GM12878 (cell line): ENCODE measurements at regions of chr4 and their contacts with region 1.

Region 1: DNA sequence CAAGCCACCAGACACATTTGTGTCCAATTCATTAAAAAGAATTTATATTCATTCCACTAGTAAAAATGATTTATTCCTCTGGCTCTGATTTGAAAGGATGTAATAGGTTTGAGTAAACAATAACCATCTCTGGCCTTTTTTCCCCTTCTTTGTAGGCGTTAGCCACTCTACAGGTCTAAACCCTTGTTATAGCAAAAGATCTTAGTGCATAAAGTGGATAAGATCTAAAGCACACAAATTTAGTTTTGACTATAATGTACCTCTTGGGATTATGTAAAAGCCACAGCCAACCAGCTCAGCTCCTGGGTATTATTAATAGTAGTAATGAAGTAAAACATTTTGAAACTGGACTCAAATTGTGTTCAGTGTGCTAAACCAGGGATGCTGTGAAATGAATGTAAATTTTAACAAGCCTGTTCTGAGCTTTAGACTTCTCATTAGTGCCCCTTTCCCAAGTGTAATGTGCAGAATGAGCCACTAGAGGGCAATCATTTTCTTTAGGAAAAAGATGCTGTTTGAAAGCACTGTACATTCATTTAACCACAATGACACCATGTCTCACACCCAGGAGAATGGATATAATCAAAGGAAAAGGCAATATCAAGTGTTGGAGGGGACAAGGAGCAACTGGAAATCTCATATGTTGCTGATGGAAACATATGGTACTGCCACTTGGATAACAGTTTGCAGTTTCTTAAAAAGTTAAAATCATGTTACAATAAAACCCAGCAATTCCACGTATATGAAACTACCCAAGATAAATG is 69.7 kb downstream of the KLHL8 start:
- DNase-seq: peak; percentile 35
- ATAC-seq: peak; percentile 84
- H3K4me3 ChIP-seq: no peak overlapping the region
- H3K27ac ChIP-seq: no peak overlapping the region
- H3K4me1 ChIP-seq: no peaks in the 10 kb centered on the region
- H3K27me3 ChIP-seq: no peaks in the 10 kb centered on the region
- CTCF ChIP-seq: peak; percentile 82 to 92 (median 84)
- EP300 ChIP-seq: no peak
- POLR2A ChIP-seq: no peak
- RAD21 ChIP-seq: peak; percentile 90

Region 2: GRCh38 chr4:87133183-87133582 is 17.5 kb before region 1 on chr4:
- CTCF ChIA-PET with region 1: interaction called, 8 read pairs
- POLR2A ChIA-PET with region 1: no interaction called
- RAD21 ChIA-PET with region 1: interaction called, 3 read pairs
- SMC1A ChIA-PET with region 1: interaction called, 12 read pairs
- in situ Hi-C with region 1: no loop called
- intact Hi-C with region 1: no loop called
- DNase-seq: no peak
- ATAC-seq: no peak
- H3K4me3 ChIP-seq: no peak overlapping the region
- H3K27ac ChIP-seq: no peak overlapping the region
- H3K4me1 ChIP-seq: no peaks in the 10 kb centered on the region
- H3K27me3 ChIP-seq: no peaks in the 10 kb centered on the region
- CTCF ChIP-seq: no peak
- EP300 ChIP-seq: no peak
- POLR2A ChIP-seq: no peak
- RAD21 ChIP-seq: no peak

Region 3: GRCh38 chr4:87171944-87172343 is 21.3 kb after region 1 on chr4:
- CTCF ChIA-PET with region 1: interaction called, 21 read pairs
- POLR2A ChIA-PET with region 1: no interaction called
- RAD21 ChIA-PET with region 1: interaction called, 6 read pairs
- SMC1A ChIA-PET with region 1: interaction called, 4 read pairs
- in situ Hi-C with region 1: no loop called
- intact Hi-C with region 1: no loop called
- DNase-seq: no peak
- ATAC-seq: no peak
- H3K4me3 ChIP-seq: no peak overlapping the region
- H3K27ac ChIP-seq: no peak overlapping the region
- H3K4me1 ChIP-seq: no peaks in the 10 kb centered on the region
- H3K27me3 ChIP-seq: no peaks in the 10 kb centered on the region
- CTCF ChIP-seq: no peak
- EP300 ChIP-seq: no peak
- POLR2A ChIP-seq: no peak
- RAD21 ChIP-seq: no peak

Region 4: GRCh38 chr4:87193958-87194675 is 43.4 kb after region 1 on chr4:
- CTCF ChIA-PET with region 1: interaction called, 12 read pairs
- POLR2A ChIA-PET with region 1: interaction called, 4 read pairs
- RAD21 ChIA-PET with region 1: no interaction called
- SMC1A ChIA-PET with region 1: interaction called, 3 read pairs
- in situ Hi-C with region 1: no loop called
- intact Hi-C with region 1: no loop called
- DNase-seq: no peak
- ATAC-seq: no peak
- H3K4me3 ChIP-seq: no peak overlapping the region
- H3K27ac ChIP-seq: no peak overlapping the region
- H3K4me1 ChIP-seq: peaks cover 3% of the 10 kb centered on the region; the same call in 1 of the 2 replicates
- H3K27me3 ChIP-seq: no peaks in the 10 kb centered on the region
- CTCF ChIP-seq: no peak
- EP300 ChIP-seq: no peak
- POLR2A ChIP-seq: no peak
- RAD21 ChIP-seq: no peak

Region 5: GRCh38 chr4:87220094-87220822 is 69.6 kb after region 1 on chr4 and contains the start of gene KLHL8:
- CTCF ChIA-PET with region 1: interaction called, 6 read pairs
- POLR2A ChIA-PET with region 1: interaction called, 3 read pairs
- RAD21 ChIA-PET with region 1: interaction called, 7 read pairs
- SMC1A ChIA-PET with region 1: interaction called, 30 read pairs
- in situ Hi-C with region 1: no loop called
- intact Hi-C with region 1: no loop called
- DNase-seq: peak; percentile 40
- ATAC-seq: peak; percentile 96
- H3K4me3 ChIP-seq: peak within 1 kb of the TSS; percentile 100
- H3K27ac ChIP-seq: peak within 1 kb of the TSS; percentile 93
- H3K4me1 ChIP-seq: no peaks in the 10 kb centered on the region; the same call in 1 of the 2 replicates
- H3K27me3 ChIP-seq: no peaks in the 10 kb centered on the region; a peak in 1 of 4 replicates
- CTCF ChIP-seq: peak in 2 of 3 experiments; percentile 11 to 17; a peak in 3 of 6 replicates
- EP300 ChIP-seq: no peak
- POLR2A ChIP-seq: peak; percentile 97
- RAD21 ChIP-seq: no peak
- polyA plus RNA-seq, gene KLHL8: 4.5 to 5.1 TPM

Region 6: DNA sequence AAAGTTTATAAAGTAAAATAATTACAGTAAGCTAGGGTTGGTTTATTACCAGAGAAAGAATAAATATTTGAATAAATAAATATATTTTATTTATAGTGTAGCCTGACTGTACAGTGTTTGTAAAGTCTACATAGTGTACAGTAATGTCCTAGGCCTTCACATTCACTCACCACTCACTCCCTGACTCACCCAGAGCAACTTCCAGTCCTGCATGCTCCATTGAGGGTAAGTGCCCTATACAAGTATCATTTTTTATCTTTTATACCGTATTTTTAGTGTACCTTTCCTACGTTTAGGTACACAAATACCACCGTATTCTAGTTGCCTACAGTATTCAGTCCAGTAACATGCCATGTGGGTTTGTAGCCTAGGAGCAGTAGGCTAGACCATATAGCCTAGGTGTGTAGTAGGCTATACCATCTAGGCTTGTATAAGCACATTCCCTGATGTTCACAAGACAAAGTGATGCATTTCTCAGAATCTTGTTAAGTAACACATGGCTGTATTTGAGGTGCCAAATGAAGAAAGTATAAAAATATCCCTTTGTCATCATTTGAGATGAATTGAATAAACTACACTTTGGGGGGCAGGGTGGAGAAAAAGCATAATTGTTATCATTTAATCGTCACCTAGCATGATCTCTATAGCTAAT is 84.5 kb after region 1 on chr4:
- CTCF ChIA-PET with region 1: interaction called, 130 read pairs
- POLR2A ChIA-PET with region 1: interaction called, 4 read pairs
- RAD21 ChIA-PET with region 1: interaction called, 61 read pairs
- SMC1A ChIA-PET with region 1: interaction called, 79 read pairs
- in situ Hi-C with region 1: no loop called
- intact Hi-C with region 1: loop called (anchors 1 kb)
- DNase-seq: no peak
- ATAC-seq: peak; percentile 32; the same call in 2 of the 3 replicates
- H3K4me3 ChIP-seq: peak overlapping the region; percentile 66; the same call in 1 of the 2 replicates
- H3K27ac ChIP-seq: no peak overlapping the region
- H3K4me1 ChIP-seq: no peaks in the 10 kb centered on the region; the same call in 1 of the 2 replicates
- H3K27me3 ChIP-seq: no peaks in the 10 kb centered on the region
- CTCF ChIP-seq: no peak
- EP300 ChIP-seq: no peak
- POLR2A ChIP-seq: no peak
- RAD21 ChIP-seq: no peak

Region 7: GRCh38 chr4:87465739-87466366 is 315.2 kb after region 1 on chr4:
- CTCF ChIA-PET with region 1: interaction called, 13 read pairs
- POLR2A ChIA-PET with region 1: no interaction called
- RAD21 ChIA-PET with region 1: interaction called, 4 read pairs
- SMC1A ChIA-PET with region 1: interaction called, 6 read pairs
- in situ Hi-C with region 1: no loop called
- intact Hi-C with region 1: loop called (anchors 2 kb)
- DNase-seq: peak; percentile 9
- ATAC-seq: peak; percentile 74
- H3K4me3 ChIP-seq: no peak overlapping the region
- H3K27ac ChIP-seq: no peak overlapping the region
- H3K4me1 ChIP-seq: no peaks in the 10 kb centered on the region
- H3K27me3 ChIP-seq: no peaks in the 10 kb centered on the region
- CTCF ChIP-seq: peak; percentile 35 to 65 (median 52); a peak in 5 of 6 replicates
- EP300 ChIP-seq: no peak
- POLR2A ChIP-seq: no peak
- RAD21 ChIP-seq: peak; percentile 91

Region 8: GRCh38 chr4:88216395-88216794 is 1065.7 kb after region 1 on chr4:
- CTCF ChIA-PET with region 1: no interaction called
- POLR2A ChIA-PET with region 1: no interaction called
- RAD21 ChIA-PET with region 1: no interaction called
- SMC1A ChIA-PET with region 1: no interaction called
- in situ Hi-C with region 1: no loop called
- intact Hi-C with region 1: no loop called
- DNase-seq: no peak
- ATAC-seq: no peak
- H3K4me3 ChIP-seq: no peak overlapping the region
- H3K27ac ChIP-seq: no peak overlapping the region
- H3K4me1 ChIP-seq: no peaks in the 10 kb centered on the region
- H3K27me3 ChIP-seq: no peaks in the 10 kb centered on the region
- CTCF ChIP-seq: no peak
- EP300 ChIP-seq: no peak
- POLR2A ChIP-seq: no peak
- RAD21 ChIP-seq: no peak